A549 (cell line): ENCODE measurements at regions of chr3 and their contacts with region 1.

Region 1: DNA sequence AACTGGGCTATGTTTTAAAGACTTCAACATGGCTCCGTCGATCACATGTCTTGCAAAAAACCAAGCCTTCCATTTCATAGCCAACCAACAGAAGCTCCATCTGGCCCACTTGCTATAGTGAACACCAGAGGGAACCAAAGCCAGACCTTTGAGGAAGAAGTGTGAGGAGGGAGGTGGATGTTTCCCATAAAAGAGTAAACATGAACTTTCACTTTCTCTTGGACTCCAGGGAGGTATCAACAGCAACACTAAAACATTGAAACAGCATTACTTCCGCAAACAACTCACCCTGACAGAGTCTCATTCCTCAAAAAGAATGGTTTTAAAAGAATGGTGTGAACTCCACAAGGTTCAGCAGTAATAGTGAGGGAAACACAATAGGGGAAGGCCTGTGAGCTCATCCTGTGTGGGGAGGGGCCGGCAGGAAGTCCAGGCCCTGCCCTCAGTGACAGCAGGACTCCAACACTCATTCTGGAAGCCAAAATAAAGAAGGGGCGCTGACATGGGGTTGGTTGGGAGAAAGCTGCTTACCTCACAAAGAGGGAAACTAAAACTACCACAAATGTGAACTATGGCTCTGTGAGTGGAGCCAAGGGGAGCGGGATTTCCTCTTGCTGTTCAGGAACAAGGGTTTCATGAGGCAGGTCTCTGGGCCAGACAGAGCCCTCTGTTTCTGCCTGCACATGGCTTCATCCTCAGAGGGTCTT is 59.0 kb upstream of the IL12A start:
- DNase-seq: peak; percentile 44 to 66
- ATAC-seq: peak; percentile 58 to 70
- H3K4me3 ChIP-seq: no peak overlapping the region
- H3K27ac ChIP-seq: peak overlapping the region; percentile 70 to 82
- H3K4me1 ChIP-seq: peaks cover 25% of the 10 kb centered on the region
- CTCF ChIP-seq: peak; percentile 17; the same call in 1 of the 3 replicates
- EP300 ChIP-seq: no peak
- POLR2A ChIP-seq: no peak
- RAD21 ChIP-seq: peak; percentile 31 to 45; a peak in 4 of 5 replicates

Region 2: GRCh38 chr3:159861369-159861987 is 68.1 kb before region 1 on chr3:
- CTCF ChIA-PET with region 1: no interaction called
- POLR2A ChIA-PET with region 1: no interaction called
- DNase-seq: no peak
- ATAC-seq: no peak
- H3K4me3 ChIP-seq: no peak overlapping the region
- H3K27ac ChIP-seq: no peak overlapping the region; a peak in 1 of 6 replicates
- H3K4me1 ChIP-seq: peaks cover 35% of the 10 kb centered on the region
- CTCF ChIP-seq: no peak
- EP300 ChIP-seq: no peak
- POLR2A ChIP-seq: no peak
- RAD21 ChIP-seq: no peak

Region 3: GRCh38 chr3:159947220-159947619 is 17.6 kb after region 1 on chr3:
- CTCF ChIA-PET with region 1: interaction called, 12 read pairs
- POLR2A ChIA-PET with region 1: no interaction called
- DNase-seq: no peak
- ATAC-seq: no peak
- H3K4me3 ChIP-seq: no peak overlapping the region
- H3K27ac ChIP-seq: no peak overlapping the region
- H3K4me1 ChIP-seq: 0 out of 3 replicates have a peak, but pooled peaks cover 3% of the 10 kb centered on the region
- CTCF ChIP-seq: no peak
- EP300 ChIP-seq: no peak
- POLR2A ChIP-seq: no peak
- RAD21 ChIP-seq: no peak

Region 4: GRCh38 chr3:159996959-159997358 is 67.4 kb after region 1 on chr3:
- CTCF ChIA-PET with region 1: no interaction called
- POLR2A ChIA-PET with region 1: no interaction called
- DNase-seq: no peak
- ATAC-seq: no peak
- H3K4me3 ChIP-seq: no peak overlapping the region
- H3K27ac ChIP-seq: no peak overlapping the region
- H3K4me1 ChIP-seq: 0 out of 3 replicates have a peak, but pooled peaks cover 4% of the 10 kb centered on the region
- CTCF ChIP-seq: no peak
- EP300 ChIP-seq: no peak
- POLR2A ChIP-seq: no peak
- RAD21 ChIP-seq: no peak